ENCODE measurements at regions of chr6 and their contacts with region 1.

Region 1: GRCh38 chr6:18122124-18123093 is at the start of gene NHLRC1:
- DNase-seq: peak; percentile 92
- H3K4me3 ChIP-seq: peak within 1 kb of the TSS in 1 of 3 experiments; percentile 35
- H3K27ac ChIP-seq: no peak within 1 kb of the TSS
- H3K4me1 ChIP-seq: peaks cover 5% of the 10 kb centered on the region
- H3K27me3 ChIP-seq: no peaks in the 10 kb centered on the region
- CTCF ChIP-seq: peak; percentile 94 to 97
- POLR2A ChIP-seq: peak; percentile 65
- total RNA-seq, gene NHLRC1: 2.2 and 2.3 TPM in 2 replicates

Region 2: GRCh38 chr6:17820055-17820454 is 302.4 kb before region 1 on chr6:
- CTCF ChIA-PET with region 1: interaction called, 24 read pairs
- POLR2A ChIA-PET with region 1: no interaction called
- dilution Hi-C with region 1: no loop called
- intact Hi-C with region 1: loop called (anchors 1 kb)
- DNase-seq: no peak
- H3K4me3 ChIP-seq: no peak overlapping the region
- H3K27ac ChIP-seq: no peak overlapping the region
- H3K4me1 ChIP-seq: no peaks in the 10 kb centered on the region
- H3K27me3 ChIP-seq: no peaks in the 10 kb centered on the region
- CTCF ChIP-seq: no peak
- POLR2A ChIP-seq: no peak

Region 3: GRCh38 chr6:17831135-17831534 is 291.3 kb before region 1 on chr6:
- CTCF ChIA-PET with region 1: no interaction called
- POLR2A ChIA-PET with region 1: no interaction called
- dilution Hi-C with region 1: no loop called
- intact Hi-C with region 1: loop called (anchors 2 kb)
- DNase-seq: peak; percentile 98
- H3K4me3 ChIP-seq: no peak overlapping the region
- H3K27ac ChIP-seq: peak overlapping the region; percentile 96
- H3K4me1 ChIP-seq: peaks cover 23% of the 10 kb centered on the region
- H3K27me3 ChIP-seq: no peaks in the 10 kb centered on the region
- CTCF ChIP-seq: peak in 1 of 2 donors; percentile 7
- POLR2A ChIP-seq: peak; percentile 49

Region 4: DNA sequence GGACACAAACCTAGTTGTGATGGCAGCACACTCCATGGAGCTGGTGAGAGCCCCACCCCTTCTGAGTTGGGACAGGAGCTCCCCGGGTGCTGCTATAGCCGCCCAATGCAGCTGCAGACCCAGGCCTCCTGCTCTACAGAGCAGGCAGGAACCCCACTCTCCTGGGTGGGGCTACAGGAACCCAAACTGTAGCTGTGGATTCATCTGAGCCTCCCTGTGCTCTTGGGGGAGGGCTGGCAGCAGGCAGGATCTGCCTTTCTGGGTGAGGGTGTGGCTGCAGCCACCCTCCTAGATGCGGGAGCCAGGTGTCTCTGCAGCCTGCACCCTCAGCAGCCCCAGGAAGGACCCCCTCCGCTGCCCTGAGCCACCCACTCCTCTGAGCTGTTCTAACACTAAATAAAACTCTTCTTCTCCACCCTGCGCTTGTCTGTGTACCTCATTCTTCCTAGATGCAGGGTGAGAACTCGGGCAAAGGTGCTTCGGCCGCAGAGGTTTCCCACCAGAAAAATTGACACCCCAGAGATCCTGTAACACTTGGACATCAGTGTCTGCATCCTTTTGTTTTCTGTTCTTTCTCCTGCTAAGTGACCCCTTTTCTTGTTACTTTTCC is 79.8 kb before region 1 on chr6:
- CTCF ChIA-PET with region 1: interaction called, 3 read pairs
- POLR2A ChIA-PET with region 1: no interaction called
- dilution Hi-C with region 1: no loop called
- intact Hi-C with region 1: loop called (anchors 5 kb)
- DNase-seq: no peak
- H3K4me3 ChIP-seq: no peak overlapping the region
- H3K27ac ChIP-seq: no peak overlapping the region
- H3K4me1 ChIP-seq: peaks cover 3% of the 10 kb centered on the region
- H3K27me3 ChIP-seq: no peaks in the 10 kb centered on the region
- CTCF ChIP-seq: no peak
- POLR2A ChIP-seq: no peak

Region 5: GRCh38 chr6:18221288-18221615 is 98.8 kb after region 1 on chr6:
- CTCF ChIA-PET with region 1: no interaction called
- POLR2A ChIA-PET with region 1: no interaction called
- dilution Hi-C with region 1: no loop called
- intact Hi-C with region 1: no loop called
- DNase-seq: no peak
- H3K4me3 ChIP-seq: no peak overlapping the region
- H3K27ac ChIP-seq: no peak overlapping the region
- H3K4me1 ChIP-seq: no peaks in the 10 kb centered on the region
- H3K27me3 ChIP-seq: no peaks in the 10 kb centered on the region
- CTCF ChIP-seq: no peak
- POLR2A ChIP-seq: no peak